T-cell (primary cell): ENCODE measurements at regions of chr13 and their contacts with region 1.

Region 1: DNA sequence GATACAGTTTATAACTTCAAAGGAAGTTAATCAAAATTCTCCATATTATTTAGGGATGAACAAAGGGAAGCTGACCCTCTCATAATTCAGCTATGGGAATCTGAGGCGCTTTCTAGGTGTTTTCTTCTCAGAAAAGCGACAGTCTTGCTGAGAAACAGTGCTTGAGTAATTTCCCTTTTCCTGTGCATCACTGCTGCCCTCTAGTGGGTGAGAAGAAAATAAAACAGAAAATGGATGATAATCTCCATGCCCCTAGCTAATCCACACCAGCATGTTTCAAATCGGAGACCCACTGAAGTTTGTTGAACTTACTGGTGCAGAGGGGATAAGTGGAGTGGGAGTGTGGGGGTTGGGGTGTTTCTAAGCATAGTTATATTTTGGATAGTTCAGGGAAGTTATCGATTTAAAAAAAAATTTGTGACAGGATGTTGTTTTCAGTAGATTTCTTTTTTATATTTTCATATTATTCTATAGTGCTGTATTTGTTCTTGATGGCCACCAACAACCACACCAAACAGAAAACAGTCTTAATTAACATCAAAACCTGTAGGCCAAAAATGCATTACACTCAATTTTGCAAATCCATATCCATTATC is 21.4 kb downstream of the LCP1 start:
- DNase-seq: peak in 15 of 35 experiments; percentile 12 to 92 (median 36)
- ATAC-seq: peak; percentile 76 to 83 (median 80)
- H3K4me3 ChIP-seq: no peak overlapping the region
- H3K4me3 Mint-ChIP-seq: peak overlapping the region; percentile 61 to 72 (median 64)
- H3K27ac ChIP-seq: peak overlapping the region; percentile 78
- H3K27ac Mint-ChIP-seq: peak overlapping the region; percentile 90 to 93
- H3K4me1 ChIP-seq: peaks cover 28 to 39% of the 10 kb centered on the region in 2 experiments
- H3K4me1 Mint-ChIP-seq: peaks cover 51 to 62% (median 61%) of the 10 kb centered on the region in 3 donors
- H3K27me3 ChIP-seq: no peaks in the 10 kb centered on the region
- H3K27me3 Mint-ChIP-seq: no peaks in the 10 kb centered on the region

Region 2: GRCh38 chr13:46176756-46177155 is 16.2 kb after region 1 on chr13:
- CTCF ChIA-PET with region 1: interaction called, 19 to 73 read pairs
- POLR2A ChIA-PET with region 1: interaction called, 5 to 13 read pairs
- DNase-seq: peak in 1 of 35 experiments; percentile 23
- ATAC-seq: no peak
- H3K4me3 ChIP-seq: peak overlapping the region; percentile 30 to 42
- H3K4me3 Mint-ChIP-seq: peak overlapping the region; percentile 90 to 99 (median 94)
- H3K27ac ChIP-seq: peak overlapping the region; percentile 83
- H3K27ac Mint-ChIP-seq: peak overlapping the region; percentile 85 to 93
- H3K4me1 ChIP-seq: peaks cover 40 to 75% of the 10 kb centered on the region in 2 experiments
- H3K4me1 Mint-ChIP-seq: peaks cover 75 to 89% (median 81%) of the 10 kb centered on the region in 3 donors
- H3K27me3 ChIP-seq: no peaks in the 10 kb centered on the region
- H3K27me3 Mint-ChIP-seq: no peaks in the 10 kb centered on the region

Region 3: GRCh38 chr13:46211483-46212351 is 51.1 kb after region 1 on chr13 and contains the start of gene LRRC63:
- CTCF ChIA-PET with region 1: interaction called, 5 to 11 read pairs
- POLR2A ChIA-PET with region 1: interaction called, 4 read pairs
- DNase-seq: peak; percentile 63 to 87 (median 77)
- ATAC-seq: peak; percentile 91 to 100 (median 99)
- H3K4me3 ChIP-seq: peak within 1 kb of the TSS; percentile 65 to 76
- H3K4me3 Mint-ChIP-seq: peak within 1 kb of the TSS; percentile 89 to 96 (median 93)
- H3K27ac ChIP-seq: peak within 1 kb of the TSS; percentile 86
- H3K27ac Mint-ChIP-seq: peak within 1 kb of the TSS; percentile 93 to 96
- H3K4me1 ChIP-seq: peaks cover 5 to 7% of the 10 kb centered on the region in 2 experiments
- H3K4me1 Mint-ChIP-seq: peaks cover 24 to 31% (median 26%) of the 10 kb centered on the region in 3 donors
- H3K27me3 ChIP-seq: no peaks in the 10 kb centered on the region
- H3K27me3 Mint-ChIP-seq: no peaks in the 10 kb centered on the region
- total RNA-seq, gene LRRC63: 0.43 to 0.82 (median 0.54) TPM

Region 4: GRCh38 chr13:46295491-46296114 is 135.0 kb after region 1 on chr13:
- CTCF ChIA-PET with region 1: interaction called, 10 to 20 read pairs
- POLR2A ChIA-PET with region 1: no interaction called
- DNase-seq: peak; percentile 31 to 92 (median 79)
- ATAC-seq: peak; percentile 90 to 91 (median 90)
- H3K4me3 ChIP-seq: peak overlapping the region; percentile 6 to 11
- H3K4me3 Mint-ChIP-seq: peak overlapping the region; percentile 50 to 68 (median 61)
- H3K27ac ChIP-seq: peak overlapping the region; percentile 86
- H3K27ac Mint-ChIP-seq: peak overlapping the region; percentile 96 to 99
- H3K4me1 ChIP-seq: peaks cover 36 to 40% of the 10 kb centered on the region in 2 experiments
- H3K4me1 Mint-ChIP-seq: peaks cover 61 to 66% (median 61%) of the 10 kb centered on the region in 3 donors
- H3K27me3 ChIP-seq: no peaks in the 10 kb centered on the region
- H3K27me3 Mint-ChIP-seq: no peaks in the 10 kb centered on the region